ENCODE measurements at regions of chrX and their contacts with region 1.

Region 1: DNA sequence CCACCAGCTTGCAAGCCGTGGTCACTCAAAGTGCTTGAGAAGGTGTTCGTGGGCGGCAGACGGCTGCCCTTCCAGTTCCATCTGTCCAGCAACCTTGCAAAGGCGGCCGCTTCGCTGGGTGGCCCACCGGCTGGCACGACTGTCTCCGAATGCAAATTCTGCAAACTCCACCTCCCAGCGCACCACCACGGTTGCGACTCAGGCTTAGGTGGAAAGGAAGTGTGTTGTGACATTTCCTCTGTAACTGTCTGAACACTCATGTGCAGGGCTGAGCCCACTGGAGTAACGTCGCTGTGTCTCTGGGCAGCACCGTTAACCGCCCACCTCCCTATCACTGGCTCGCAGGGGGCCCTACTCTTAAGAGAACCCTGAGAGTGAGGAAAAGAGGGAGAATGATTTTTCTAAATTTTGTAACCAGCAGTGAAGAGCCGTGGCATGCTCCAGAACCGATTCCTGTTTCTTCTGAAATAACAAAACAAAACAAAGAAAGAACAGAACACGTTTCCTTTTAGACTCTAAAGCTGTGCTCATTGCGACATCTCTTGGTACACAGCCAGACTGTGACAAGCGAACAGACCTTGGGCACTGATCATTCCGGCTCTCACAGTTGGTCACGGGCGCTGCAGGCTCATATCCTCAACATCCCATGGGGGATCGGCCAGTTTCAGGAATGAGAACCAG is at the start of gene P2RY8:
- DNase-seq: peak; percentile 89
- H3K4me3 Mint-ChIP-seq: peak within 1 kb of the TSS; percentile 91
- H3K27ac Mint-ChIP-seq: peak within 1 kb of the TSS; percentile 97
- H3K4me1 Mint-ChIP-seq: peaks cover 15% of the 10 kb centered on the region
- H3K27me3 Mint-ChIP-seq: no peaks in the 10 kb centered on the region
- total RNA-seq, gene P2RY8: 9.8 to 10.6 TPM

Region 2: DNA sequence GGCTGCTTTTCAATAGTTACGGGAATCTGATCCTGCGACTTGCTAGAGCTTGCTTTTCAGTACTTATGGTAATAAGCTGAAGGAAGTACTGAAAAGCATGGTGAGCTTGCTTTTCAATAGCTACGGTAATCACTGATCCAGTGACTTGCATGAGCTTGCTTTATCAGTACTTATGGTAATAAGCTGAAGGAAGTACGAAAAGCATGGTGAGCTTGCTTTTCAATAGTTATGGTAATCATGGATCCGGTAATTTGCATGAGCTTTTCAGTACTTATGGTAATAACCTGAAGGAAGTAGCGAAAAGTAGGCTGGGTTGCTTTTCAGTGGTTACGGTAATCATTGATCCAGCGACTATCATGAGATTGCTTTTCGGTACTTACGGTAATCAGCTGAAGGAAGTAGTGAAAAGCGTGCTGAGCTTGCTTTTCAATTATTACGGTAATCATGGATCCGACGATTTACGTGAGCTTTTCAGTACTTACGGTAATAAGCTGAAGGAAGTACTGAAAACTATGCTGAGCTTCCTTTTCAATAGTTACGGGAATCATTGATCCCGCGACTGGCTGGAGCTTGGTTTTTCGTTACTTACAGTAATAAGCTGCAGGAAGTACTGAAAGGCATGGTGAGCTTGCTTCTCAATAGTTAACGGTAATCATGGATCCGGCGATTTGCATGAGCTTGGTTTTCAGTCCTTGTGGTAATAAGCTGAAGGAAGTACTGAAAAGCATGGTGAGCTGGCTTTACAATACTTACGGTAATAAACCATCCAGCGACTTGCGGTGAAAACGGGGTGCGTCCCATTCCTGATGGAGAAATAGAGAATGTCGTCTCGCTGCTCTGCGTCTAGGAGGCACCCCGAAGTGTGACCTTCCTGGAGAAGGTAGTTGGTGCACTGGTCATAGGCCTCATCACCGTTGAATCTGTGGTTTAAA is 331.2 kb before region 1 on chrX:
- CTCF ChIA-PET with region 1: no interaction called
- intact Hi-C with region 1: loop called (anchors 5 kb)
- DNase-seq: peak; percentile 67
- H3K4me3 Mint-ChIP-seq: peak overlapping the region; percentile 72
- H3K27ac Mint-ChIP-seq: peak overlapping the region; percentile 72
- H3K4me1 Mint-ChIP-seq: peaks cover 17% of the 10 kb centered on the region
- H3K27me3 Mint-ChIP-seq: no peaks in the 10 kb centered on the region

Region 3: DNA sequence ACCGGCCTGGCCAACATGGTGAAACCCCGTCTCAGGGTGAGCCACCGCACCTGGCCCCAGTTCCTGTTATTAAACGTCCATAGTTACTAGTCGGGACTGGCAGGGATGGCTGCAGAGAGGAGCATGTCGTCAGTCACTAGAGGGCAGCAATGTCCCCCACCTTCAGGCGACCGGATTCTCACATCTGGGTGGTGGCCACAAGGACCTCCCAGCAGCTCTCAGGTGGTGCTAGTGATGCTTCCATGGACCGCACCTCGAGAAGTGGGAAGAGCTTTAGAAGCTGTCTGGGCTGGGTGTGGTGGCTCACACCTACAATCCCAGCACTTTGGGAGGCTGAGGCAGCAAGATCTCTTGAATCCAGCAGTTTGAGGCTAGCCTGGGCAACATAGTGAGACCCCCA is 213.9 kb before region 1 on chrX:
- CTCF ChIA-PET with region 1: no interaction called
- intact Hi-C with region 1: loop called (anchors 1 kb)
- DNase-seq: peak; percentile 83
- H3K4me3 Mint-ChIP-seq: no peak overlapping the region
- H3K27ac Mint-ChIP-seq: no peak overlapping the region
- H3K4me1 Mint-ChIP-seq: peaks cover 11% of the 10 kb centered on the region
- H3K27me3 Mint-ChIP-seq: peaks cover 8% of the 10 kb centered on the region

Region 4: GRCh38 chrX:1351981-1352714 is 185.0 kb before region 1 on chrX:
- CTCF ChIA-PET with region 1: no interaction called
- intact Hi-C with region 1: no loop called
- DNase-seq: no peak
- H3K4me3 Mint-ChIP-seq: no peak overlapping the region
- H3K27ac Mint-ChIP-seq: no peak overlapping the region
- H3K4me1 Mint-ChIP-seq: peaks cover 6% of the 10 kb centered on the region
- H3K27me3 Mint-ChIP-seq: no peaks in the 10 kb centered on the region

Region 5: GRCh38 chrX:1462596-1463251 is 74.5 kb before region 1 on chrX:
- CTCF ChIA-PET with region 1: no interaction called
- intact Hi-C with region 1: loop called (anchors 1 kb)
- DNase-seq: peak; percentile 91
- H3K4me3 Mint-ChIP-seq: peak overlapping the region; percentile 28
- H3K27ac Mint-ChIP-seq: peak overlapping the region; percentile 89
- H3K4me1 Mint-ChIP-seq: peaks cover 53% of the 10 kb centered on the region
- H3K27me3 Mint-ChIP-seq: no peaks in the 10 kb centered on the region

Region 6: GRCh38 chrX:1481636-1482529 is 55.3 kb before region 1 on chrX:
- CTCF ChIA-PET with region 1: no interaction called
- intact Hi-C with region 1: loop called (anchors 2 kb)
- DNase-seq: peak; percentile 84
- H3K4me3 Mint-ChIP-seq: peak overlapping the region; percentile 88
- H3K27ac Mint-ChIP-seq: peak overlapping the region; percentile 100
- H3K4me1 Mint-ChIP-seq: peaks cover 66% of the 10 kb centered on the region
- H3K27me3 Mint-ChIP-seq: no peaks in the 10 kb centered on the region

Region 7: GRCh38 chrX:1564750-1565683 is 27.8 kb after region 1 on chrX:
- CTCF ChIA-PET with region 1: no interaction called
- intact Hi-C with region 1: loop called (anchors 1 kb)
- DNase-seq: no peak
- H3K4me3 Mint-ChIP-seq: peak overlapping the region; percentile 21
- H3K27ac Mint-ChIP-seq: no peak overlapping the region
- H3K4me1 Mint-ChIP-seq: peaks cover 42% of the 10 kb centered on the region
- H3K27me3 Mint-ChIP-seq: no peaks in the 10 kb centered on the region